ENCODE measurements at regions of chr11 and their contacts with region 1.

Region 1: GRCh38 chr11:11848891-11849746 is 7.3 kb downstream of the USP47 start:
- DNase-seq: peak; percentile 81
- ATAC-seq: peak; percentile 80
- H3K4me3 Mint-ChIP-seq: peak overlapping the region; percentile 31
- H3K27ac Mint-ChIP-seq: peak overlapping the region; percentile 51
- H3K4me1 Mint-ChIP-seq: peaks cover 84% of the 10 kb centered on the region
- H3K27me3 Mint-ChIP-seq: no peaks in the 10 kb centered on the region

Region 2: GRCh38 chr11:11876458-11876857 is 27.3 kb after region 1 on chr11:
- CTCF ChIA-PET with region 1: interaction called, 14 read pairs
- POLR2A ChIA-PET with region 1: no interaction called
- intact Hi-C with region 1: loop called in 1 of 2 experiments (anchors 5 kb)
- DNase-seq: peak; percentile 23
- ATAC-seq: no peak
- H3K4me3 Mint-ChIP-seq: no peak overlapping the region
- H3K27ac Mint-ChIP-seq: no peak overlapping the region
- H3K4me1 Mint-ChIP-seq: peaks cover 44% of the 10 kb centered on the region
- H3K27me3 Mint-ChIP-seq: no peaks in the 10 kb centered on the region

Region 3: DNA sequence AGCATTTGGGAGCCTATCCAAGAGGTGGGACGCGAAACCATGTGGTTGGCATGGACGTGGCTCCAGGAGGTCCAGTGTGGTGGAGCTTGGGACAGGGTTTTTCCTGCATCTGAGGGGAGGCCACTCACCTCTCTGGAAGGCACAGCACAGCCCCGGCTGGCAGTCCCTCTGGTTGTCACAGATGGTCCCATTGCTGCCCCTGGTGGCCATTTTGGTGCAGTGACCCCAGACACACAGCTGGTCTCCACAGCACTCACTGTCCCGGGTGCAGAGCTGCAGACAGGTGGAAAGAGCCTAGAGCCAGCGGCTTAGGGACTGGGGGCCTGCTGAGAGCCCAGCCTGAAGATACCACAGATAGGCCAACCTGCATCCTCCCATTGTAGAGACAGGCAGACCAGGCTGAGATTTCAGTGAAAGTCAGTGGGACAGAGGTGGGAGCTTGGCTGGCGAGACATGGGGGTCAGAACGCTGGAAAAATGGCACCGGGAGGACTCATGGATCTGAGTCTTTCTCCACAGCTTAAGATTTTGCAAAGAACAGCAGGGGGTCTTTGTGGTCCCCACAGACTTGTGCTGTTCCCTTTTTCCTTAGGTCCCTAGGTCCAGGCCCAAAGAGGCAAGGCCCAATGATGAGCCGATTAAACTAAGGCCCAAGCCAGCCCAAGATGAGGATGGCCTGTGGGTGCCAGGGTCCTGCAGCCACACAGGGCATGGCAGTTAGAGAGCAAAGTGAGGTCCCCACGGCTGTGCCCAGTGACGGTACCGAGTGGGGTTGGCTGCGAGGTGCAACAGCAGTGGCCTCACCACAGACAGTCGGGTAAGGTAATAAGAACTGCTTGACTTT is 117.9 kb after region 1 on chr11:
- CTCF ChIA-PET with region 1: no interaction called
- POLR2A ChIA-PET with region 1: no interaction called
- intact Hi-C with region 1: no loop called
- DNase-seq: peak; percentile 86
- ATAC-seq: peak; percentile 98
- H3K4me3 Mint-ChIP-seq: no peak overlapping the region
- H3K27ac Mint-ChIP-seq: no peak overlapping the region
- H3K4me1 Mint-ChIP-seq: peaks cover 4% of the 10 kb centered on the region
- H3K27me3 Mint-ChIP-seq: peaks cover 2% of the 10 kb centered on the region

Region 4: GRCh38 chr11:12066799-12067508 is 217.8 kb after region 1 on chr11:
- CTCF ChIA-PET with region 1: no interaction called
- POLR2A ChIA-PET with region 1: no interaction called
- intact Hi-C with region 1: no loop called
- DNase-seq: no peak
- ATAC-seq: no peak
- H3K4me3 Mint-ChIP-seq: no peak overlapping the region
- H3K27ac Mint-ChIP-seq: no peak overlapping the region
- H3K4me1 Mint-ChIP-seq: peaks cover 1% of the 10 kb centered on the region
- H3K27me3 Mint-ChIP-seq: peaks cover 2% of the 10 kb centered on the region

Measured in activated CD4-positive, alpha-beta T cell treated with anti-CD3 and anti-CD28 coated beads for 36 hours (primary cell).